ENCODE measurements at regions of chr9 and their contacts with region 1.

Region 1: GRCh38 chr9:92790542-92791527 is 26.2 kb upstream of the BICD2 start:
- DNase-seq: peak; percentile 75
- ATAC-seq: peak; percentile 99
- H3K4me3 ChIP-seq: no peak overlapping the region
- H3K27ac ChIP-seq: no peak overlapping the region
- H3K4me1 ChIP-seq: no peaks in the 10 kb centered on the region
- H3K27me3 ChIP-seq: peaks cover 33% of the 10 kb centered on the region
- CTCF ChIP-seq: peak; percentile 94
- POLR2A ChIP-seq: no peak
- RAD21 ChIP-seq: peak; percentile 95

Region 2: GRCh38 chr9:92140074-92140753 is 650.6 kb before region 1 on chr9:
- CTCF ChIA-PET with region 1: no interaction called
- POLR2A ChIA-PET with region 1: no interaction called
- dilution Hi-C with region 1: no loop called
- in situ Hi-C with region 1: no loop called
- intact Hi-C with region 1: loop called (anchors 5 kb)
- DNase-seq: peak; percentile 65
- ATAC-seq: peak; percentile 55
- H3K4me3 ChIP-seq: peak overlapping the region; percentile 65
- H3K27ac ChIP-seq: peak overlapping the region; percentile 92
- H3K4me1 ChIP-seq: peaks cover 35% of the 10 kb centered on the region
- H3K27me3 ChIP-seq: no peaks in the 10 kb centered on the region
- CTCF ChIP-seq: peak; percentile 92
- POLR2A ChIP-seq: no peak
- RAD21 ChIP-seq: peak; percentile 86

Region 3: GRCh38 chr9:92325269-92325990 is 465.4 kb before region 1 on chr9 and contains the starts of genes CENPP and NOL8:
- CTCF ChIA-PET with region 1: interaction called, 3 read pairs
- POLR2A ChIA-PET with region 1: no interaction called
- dilution Hi-C with region 1: no loop called
- in situ Hi-C with region 1: loop called (anchors 25 kb)
- intact Hi-C with region 1: loop called (anchors 1 kb)
- DNase-seq: peak; percentile 86
- ATAC-seq: peak; percentile 95
- H3K4me3 ChIP-seq: peak within 1 kb of the TSS; percentile 64
- H3K27ac ChIP-seq: peak within 1 kb of the TSS; percentile 96
- H3K4me1 ChIP-seq: no peaks in the 10 kb centered on the region
- H3K27me3 ChIP-seq: no peaks in the 10 kb centered on the region
- CTCF ChIP-seq: no peak
- POLR2A ChIP-seq: peak; percentile 75; the same call in 1 of the 2 replicates
- RAD21 ChIP-seq: peak; percentile 9; the same call in 1 of the 2 replicates
- total RNA-seq, gene CENPP: 1.4 and 3.6 TPM in 2 replicates
- total RNA-seq, gene NOL8: 18.3 and 23.6 TPM in 2 replicates

Region 4: GRCh38 chr9:92669890-92670708 is 120.7 kb before region 1 on chr9 and contains the start of gene IPPK:
- CTCF ChIA-PET with region 1: no interaction called
- POLR2A ChIA-PET with region 1: no interaction called
- dilution Hi-C with region 1: no loop called
- in situ Hi-C with region 1: no loop called
- intact Hi-C with region 1: loop called (anchors 1 kb)
- DNase-seq: peak; percentile 99
- ATAC-seq: peak; percentile 91
- H3K4me3 ChIP-seq: peak within 1 kb of the TSS; percentile 79
- H3K27ac ChIP-seq: peak within 1 kb of the TSS; percentile 85
- H3K4me1 ChIP-seq: peaks cover 8% of the 10 kb centered on the region
- H3K27me3 ChIP-seq: no peaks in the 10 kb centered on the region
- CTCF ChIP-seq: no peak
- POLR2A ChIP-seq: peak; percentile 90
- RAD21 ChIP-seq: no peak
- total RNA-seq, gene IPPK: 25.1 and 27.5 TPM in 2 replicates

Region 5: GRCh38 chr9:92716557-92716956 is 74.3 kb before region 1 on chr9:
- CTCF ChIA-PET with region 1: interaction called, 4 read pairs
- POLR2A ChIA-PET with region 1: no interaction called
- dilution Hi-C with region 1: no loop called
- in situ Hi-C with region 1: loop called (anchors 5 kb)
- intact Hi-C with region 1: loop called (anchors 1 kb)
- DNase-seq: peak; percentile 21
- ATAC-seq: peak; percentile 88
- H3K4me3 ChIP-seq: no peak overlapping the region
- H3K27ac ChIP-seq: no peak overlapping the region
- H3K4me1 ChIP-seq: no peaks in the 10 kb centered on the region
- H3K27me3 ChIP-seq: no peaks in the 10 kb centered on the region
- CTCF ChIP-seq: peak; percentile 70
- POLR2A ChIP-seq: no peak
- RAD21 ChIP-seq: peak; percentile 81

Region 6: GRCh38 chr9:92728831-92729734 is 61.8 kb before region 1 on chr9:
- CTCF ChIA-PET with region 1: no interaction called
- POLR2A ChIA-PET with region 1: no interaction called
- dilution Hi-C with region 1: no loop called
- in situ Hi-C with region 1: no loop called
- intact Hi-C with region 1: loop called (anchors 1 kb)
- DNase-seq: peak; percentile 20
- ATAC-seq: peak; percentile 79
- H3K4me3 ChIP-seq: no peak overlapping the region
- H3K27ac ChIP-seq: no peak overlapping the region
- H3K4me1 ChIP-seq: peaks cover 3% of the 10 kb centered on the region
- H3K27me3 ChIP-seq: no peaks in the 10 kb centered on the region
- CTCF ChIP-seq: peak; percentile 54
- POLR2A ChIP-seq: no peak
- RAD21 ChIP-seq: peak; percentile 67

Region 7: GRCh38 chr9:92764988-92765936 is 25.6 kb before region 1 on chr9:
- CTCF ChIA-PET with region 1: interaction called, 3 read pairs
- POLR2A ChIA-PET with region 1: no interaction called
- dilution Hi-C with region 1: no loop called
- in situ Hi-C with region 1: no loop called
- intact Hi-C with region 1: loop called (anchors 1 kb)
- DNase-seq: peak; percentile 96
- ATAC-seq: peak; percentile 80
- H3K4me3 ChIP-seq: peak overlapping the region; percentile 56
- H3K27ac ChIP-seq: peak overlapping the region; percentile 78
- H3K4me1 ChIP-seq: peaks cover 9% of the 10 kb centered on the region
- H3K27me3 ChIP-seq: no peaks in the 10 kb centered on the region; the same call in 1 of the 2 replicates
- CTCF ChIP-seq: peak; percentile 98
- POLR2A ChIP-seq: peak; percentile 90
- RAD21 ChIP-seq: peak; percentile 65

Measured in IMR-90 (cell line).